ENCODE measurements at regions of chr17 and their contacts with region 1.

Region 1: DNA sequence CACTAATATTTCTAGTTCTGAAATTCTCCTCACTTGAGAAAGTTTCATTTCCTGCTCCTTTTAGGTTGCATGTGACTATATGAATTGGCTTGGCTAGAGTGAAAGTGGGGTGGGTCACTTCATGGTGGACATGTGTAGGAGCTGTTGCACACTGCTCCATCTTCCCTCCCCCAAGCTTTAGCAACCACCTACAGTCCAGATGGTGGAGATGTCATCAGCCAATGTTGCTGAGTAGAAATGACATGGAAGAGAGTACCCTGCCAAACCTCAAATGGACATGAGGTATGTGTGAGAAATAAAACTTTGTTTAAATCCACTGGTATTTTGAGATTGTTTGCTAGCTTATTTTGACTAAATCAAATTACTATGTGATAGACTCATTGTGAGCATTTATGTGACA is 281.5 kb downstream of the CA10 start:
- DNase-seq: no peak
- ATAC-seq: no peak
- H3K4me3 ChIP-seq: no peak overlapping the region
- H3K27ac ChIP-seq: no peak overlapping the region
- H3K4me1 ChIP-seq: no peaks in the 10 kb centered on the region
- H3K27me3 ChIP-seq: peaks cover 2% of the 10 kb centered on the region

Region 2: DNA sequence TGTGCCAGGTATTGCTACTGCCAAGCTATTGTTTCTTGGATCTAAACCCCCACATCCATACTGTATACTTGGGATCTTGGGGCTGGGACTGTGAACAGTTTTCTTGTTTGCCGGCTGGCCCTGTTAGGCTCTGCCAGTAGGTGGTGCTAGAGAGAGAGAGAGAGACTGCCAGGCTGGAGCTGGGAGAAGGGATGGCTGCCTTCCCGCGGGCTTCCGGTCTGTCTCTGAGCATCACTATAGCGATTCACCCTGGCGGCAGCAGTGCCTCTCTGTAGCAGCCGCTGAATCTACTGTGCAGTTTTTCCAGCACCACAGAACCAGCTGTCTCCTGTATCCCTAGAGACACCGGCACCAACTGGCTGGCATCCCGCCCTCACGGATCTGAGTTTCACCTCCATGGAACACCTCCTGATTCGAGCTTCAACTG is 415.4 kb before region 1 on chr17:
- intact Hi-C with region 1: no loop called
- DNase-seq: peak; percentile 57 to 85 (median 68)
- ATAC-seq: peak; percentile 65 to 80
- H3K4me3 ChIP-seq: no peak overlapping the region
- H3K27ac ChIP-seq: no peak overlapping the region
- H3K4me1 ChIP-seq: no peaks in the 10 kb centered on the region
- H3K27me3 ChIP-seq: no peaks in the 10 kb centered on the region

Region 3: GRCh38 chr17:51820252-51820651 is 56.7 kb before region 1 on chr17:
- intact Hi-C with region 1: loop called in 1 of 4 experiments (anchors 10 kb)
- DNase-seq: no peak
- ATAC-seq: no peak
- H3K4me3 ChIP-seq: no peak overlapping the region
- H3K27ac ChIP-seq: no peak overlapping the region
- H3K4me1 ChIP-seq: no peaks in the 10 kb centered on the region
- H3K27me3 ChIP-seq: no peaks in the 10 kb centered on the region